A549 (cell line): ENCODE measurements at regions of chr14 and their contacts with region 1.

Region 1: DNA sequence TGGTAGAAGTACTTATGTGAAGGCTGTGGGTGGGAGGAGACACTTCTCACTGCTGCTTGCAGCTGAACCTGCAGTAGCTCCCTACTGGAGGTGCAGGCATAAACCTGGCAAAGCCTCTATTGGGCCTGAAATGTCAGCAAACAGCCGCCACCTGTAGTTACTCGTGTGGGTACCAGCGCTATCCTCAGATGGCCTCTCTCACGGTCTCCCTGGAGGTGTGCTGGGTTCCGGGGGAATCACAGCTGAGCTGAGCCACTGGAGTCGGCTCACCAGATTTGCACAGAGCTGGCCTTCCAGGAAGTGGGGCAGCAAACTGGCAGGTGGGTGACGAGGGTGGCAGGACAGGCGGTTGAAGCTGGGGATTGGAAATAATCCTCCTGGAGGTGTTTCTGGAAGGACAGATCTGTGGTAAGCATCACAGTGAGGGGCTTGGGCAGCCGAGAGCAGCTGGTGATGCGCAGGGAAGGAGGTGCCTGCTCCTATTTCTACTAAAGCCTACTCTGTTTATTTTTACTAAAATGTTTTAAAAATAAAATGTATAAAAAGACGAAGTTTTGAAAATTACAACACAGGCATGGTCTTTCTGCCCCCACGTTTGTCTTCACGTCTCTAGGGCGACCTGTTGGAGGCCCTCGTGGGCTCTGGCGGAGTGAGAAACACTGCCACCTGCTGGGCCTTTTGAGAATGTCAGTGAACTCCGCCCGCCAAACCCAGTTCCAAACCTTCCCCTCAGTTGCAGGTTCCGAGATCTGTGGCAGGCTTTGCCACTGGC is 67.8 kb upstream of the PLEKHG3 start:
- DNase-seq: peak; percentile 74 to 84
- ATAC-seq: peak; percentile 90 to 93
- H3K4me3 ChIP-seq: no peak overlapping the region
- H3K27ac ChIP-seq: peak overlapping the region; percentile 62 to 83
- H3K4me1 ChIP-seq: peaks cover 42% of the 10 kb centered on the region
- CTCF ChIP-seq: peak; percentile 93
- EP300 ChIP-seq: no peak
- POLR2A ChIP-seq: no peak
- RAD21 ChIP-seq: peak; percentile 83 to 94

Region 2: GRCh38 chr14:64338616-64339316 is 297.6 kb before region 1 on chr14:
- CTCF ChIA-PET with region 1: interaction called, 11 read pairs
- POLR2A ChIA-PET with region 1: no interaction called
- DNase-seq: peak; percentile 99
- ATAC-seq: peak; percentile 94
- H3K4me3 ChIP-seq: peak overlapping the region; percentile 83
- H3K27ac ChIP-seq: peak overlapping the region; percentile 94 to 95
- H3K4me1 ChIP-seq: peaks cover 17% of the 10 kb centered on the region
- CTCF ChIP-seq: no peak
- EP300 ChIP-seq: no peak
- POLR2A ChIP-seq: peak; percentile 96
- RAD21 ChIP-seq: no peak

Region 3: DNA sequence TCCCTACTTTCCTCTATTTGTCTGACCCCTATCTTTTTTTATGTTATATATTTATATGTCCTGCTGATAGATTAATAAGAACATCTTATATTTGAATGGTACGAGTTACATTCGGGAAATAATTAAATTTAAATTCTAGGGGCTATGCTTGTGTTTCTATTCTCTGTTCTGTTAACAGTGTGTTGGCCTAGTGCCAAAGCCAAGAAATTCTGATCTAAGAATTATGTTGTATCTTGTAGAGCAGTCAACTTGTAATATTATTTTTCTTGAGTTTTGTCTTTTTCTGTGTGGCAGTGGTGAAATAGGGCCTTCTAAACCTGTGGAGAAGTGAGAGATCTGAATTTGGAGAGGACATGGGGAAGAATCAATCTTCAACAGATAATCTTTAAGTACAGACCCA is 104.8 kb before region 1 on chr14:
- CTCF ChIA-PET with region 1: interaction called, 182 read pairs
- POLR2A ChIA-PET with region 1: no interaction called
- DNase-seq: no peak
- ATAC-seq: no peak
- H3K4me3 ChIP-seq: no peak overlapping the region
- H3K27ac ChIP-seq: no peak overlapping the region
- H3K4me1 ChIP-seq: peaks cover 4% of the 10 kb centered on the region; the same call in 2 of the 3 replicates
- CTCF ChIP-seq: no peak
- EP300 ChIP-seq: no peak
- POLR2A ChIP-seq: no peak
- RAD21 ChIP-seq: no peak

Region 4: DNA sequence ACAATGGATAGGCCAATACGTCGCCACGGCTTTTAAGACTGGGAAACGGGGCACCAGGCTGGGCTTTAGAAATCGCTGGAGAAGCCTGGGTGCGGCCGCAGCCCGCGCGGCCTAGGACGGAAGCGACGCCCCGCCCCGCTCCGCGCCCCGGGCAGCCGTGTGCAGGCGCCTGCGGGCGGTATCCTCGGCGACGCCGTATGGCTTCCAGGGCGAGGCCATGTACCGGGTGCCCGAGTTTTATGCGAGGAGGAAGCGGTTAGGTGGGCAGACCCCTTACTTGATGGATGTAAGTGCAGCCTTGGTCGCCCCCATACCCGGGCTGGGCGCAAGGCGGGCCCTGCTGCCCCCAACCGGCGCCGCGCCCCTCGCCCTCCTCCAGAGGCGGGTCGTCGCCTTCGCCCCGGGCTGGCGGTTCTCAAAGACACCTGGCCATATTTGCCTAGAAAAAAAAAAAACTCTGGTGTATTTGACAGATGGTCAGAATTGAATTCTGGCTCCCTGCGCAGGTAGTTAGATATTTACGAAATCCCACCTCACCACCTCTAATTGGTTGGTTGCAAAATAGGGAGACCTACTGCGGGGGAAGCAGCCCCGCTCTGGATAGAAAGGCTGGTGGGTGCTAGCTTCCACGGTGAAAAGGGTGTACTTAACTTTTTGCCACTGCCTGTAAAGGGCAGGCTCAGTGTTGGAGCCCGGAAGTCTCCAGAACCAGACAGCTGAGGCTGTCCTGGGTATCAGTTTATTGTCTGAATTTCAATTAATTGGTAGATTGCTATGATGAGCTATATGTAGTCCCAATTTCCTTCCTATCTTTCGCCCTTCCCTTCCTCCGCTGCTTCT is 86.4 kb before region 1 on chr14 and contains the start of gene PPP1R36:
- CTCF ChIA-PET with region 1: interaction called, 182 read pairs
- POLR2A ChIA-PET with region 1: no interaction called
- DNase-seq: no peak
- ATAC-seq: peak; percentile 31 to 72; a peak in 4 of 6 replicates
- H3K4me3 ChIP-seq: no peak within 1 kb of the TSS
- H3K27ac ChIP-seq: peak within 1 kb of the TSS; percentile 6 to 59; a peak in 3 of 6 replicates
- H3K4me1 ChIP-seq: peaks cover 6% of the 10 kb centered on the region; the same call in 2 of the 3 replicates
- CTCF ChIP-seq: no peak
- EP300 ChIP-seq: no peak
- POLR2A ChIP-seq: no peak
- RAD21 ChIP-seq: no peak
- polyA plus RNA-seq, gene PPP1R36: 0.26 and 0.47 TPM in 2 replicates

Region 5: GRCh38 chr14:64562431-64562830 is 74.0 kb before region 1 on chr14:
- CTCF ChIA-PET with region 1: interaction called, 18 read pairs
- POLR2A ChIA-PET with region 1: no interaction called
- DNase-seq: no peak
- ATAC-seq: no peak
- H3K4me3 ChIP-seq: no peak overlapping the region
- H3K27ac ChIP-seq: no peak overlapping the region
- H3K4me1 ChIP-seq: peaks cover 15% of the 10 kb centered on the region
- CTCF ChIP-seq: no peak
- EP300 ChIP-seq: no peak
- POLR2A ChIP-seq: no peak
- RAD21 ChIP-seq: no peak

Region 6: DNA sequence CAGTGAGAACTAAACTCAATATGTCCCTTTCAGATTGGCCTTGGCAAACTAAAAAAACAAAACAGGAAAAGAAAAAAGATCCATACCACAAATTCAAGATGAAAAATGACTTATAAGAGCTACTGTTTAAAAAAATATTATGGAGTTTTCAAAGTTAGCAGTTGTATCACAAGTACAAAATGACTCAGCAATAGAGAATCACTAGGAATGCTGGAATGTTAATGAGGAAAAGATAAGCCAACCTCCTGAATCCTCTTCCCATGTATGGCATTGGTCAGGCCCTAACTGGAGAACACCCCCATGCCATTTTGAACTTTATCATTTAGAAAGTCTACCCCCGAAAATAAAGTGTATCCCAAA is 24.4 kb before region 1 on chr14:
- CTCF ChIA-PET with region 1: interaction called, 14 read pairs
- POLR2A ChIA-PET with region 1: no interaction called
- DNase-seq: peak; percentile 47 to 67
- ATAC-seq: peak in 1 of 2 experiments; percentile 81; a peak in 3 of 6 replicates
- H3K4me3 ChIP-seq: no peak overlapping the region
- H3K27ac ChIP-seq: peak overlapping the region; percentile 46 to 76
- H3K4me1 ChIP-seq: peaks cover 23% of the 10 kb centered on the region
- CTCF ChIP-seq: no peak
- EP300 ChIP-seq: no peak
- POLR2A ChIP-seq: no peak
- RAD21 ChIP-seq: no peak

Region 7: DNA sequence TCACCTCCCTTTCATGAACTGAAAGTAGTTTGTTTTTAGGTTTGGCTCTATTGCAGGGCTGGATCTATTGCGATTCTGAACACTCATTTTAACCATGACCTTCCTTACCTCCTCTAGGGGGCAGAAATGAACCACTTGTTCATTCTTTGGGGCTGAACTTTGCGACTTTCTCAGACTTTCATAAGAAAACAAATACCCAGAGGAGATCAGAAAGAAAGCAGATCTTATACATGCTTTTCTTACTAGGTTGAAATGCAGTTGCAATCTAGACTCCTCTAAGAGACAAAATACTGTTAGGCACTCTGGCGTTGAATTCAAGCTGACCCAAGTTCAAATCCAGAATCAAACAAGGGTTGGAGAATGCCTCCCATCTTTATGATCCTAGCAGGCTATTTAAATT is 35.2 kb after region 1 on chr14:
- CTCF ChIA-PET with region 1: interaction called, 13 read pairs
- POLR2A ChIA-PET with region 1: no interaction called
- DNase-seq: peak; percentile 72 to 80
- ATAC-seq: peak; percentile 74 to 87; a peak in 5 of 6 replicates
- H3K4me3 ChIP-seq: no peak overlapping the region
- H3K27ac ChIP-seq: peak overlapping the region; percentile 75 to 79
- H3K4me1 ChIP-seq: peaks cover 37% of the 10 kb centered on the region
- CTCF ChIP-seq: peak; percentile 87
- EP300 ChIP-seq: no peak
- POLR2A ChIP-seq: no peak
- RAD21 ChIP-seq: peak; percentile 94